Posterior cingulate gyrus (tissue), 11 donors: ENCODE measurements at regions of chr10 and their contacts with region 1.

Region 1: GRCh38 chr10:33330543-33331378 is 3.7 kb downstream of the NRP1 start:
- DNase-seq: peak; percentile 61 to 97 (median 88)

Region 2: GRCh38 chr10:33145451-33146188 is 185.1 kb before region 1 on chr10:
- intact Hi-C with region 1: no loop called
- DNase-seq: no peak

Region 3: GRCh38 chr10:33193057-33193700 is 137.6 kb before region 1 on chr10:
- intact Hi-C with region 1: loop called (anchors 5 kb)
- DNase-seq: peak; percentile 41 to 95 (median 70)

Region 4: GRCh38 chr10:33273295-33274002 is 57.3 kb before region 1 on chr10:
- intact Hi-C with region 1: no loop called
- DNase-seq: peak; percentile 47 to 97 (median 84)

Region 5: GRCh38 chr10:33306701-33307512 is 23.9 kb before region 1 on chr10:
- intact Hi-C with region 1: no loop called
- DNase-seq: no peak

Region 6: GRCh38 chr10:33376976-33377657 is 46.4 kb after region 1 on chr10:
- intact Hi-C with region 1: no loop called
- DNase-seq: no peak

Region 7: DNA sequence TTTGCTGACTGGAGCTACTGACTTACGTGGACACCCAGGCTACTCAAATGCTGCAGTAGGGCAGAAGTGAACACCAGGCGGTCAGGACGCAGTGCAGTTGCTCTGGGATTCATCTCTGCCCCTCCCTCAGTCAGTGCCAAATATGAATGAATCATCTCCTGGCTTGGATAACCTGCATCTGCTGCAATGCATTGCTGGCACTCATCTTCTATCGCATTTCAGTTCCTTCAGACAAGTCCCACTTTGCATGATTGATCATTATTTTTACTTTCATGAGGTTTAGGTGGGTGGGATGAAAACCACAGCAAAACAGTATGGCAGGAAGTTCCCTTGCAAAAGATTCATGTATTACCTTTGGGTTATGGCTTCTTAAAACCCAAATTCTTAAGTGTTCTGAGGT is 228.3 kb after region 1 on chr10:
- intact Hi-C with region 1: loop called (anchors 10 kb)
- DNase-seq: no peak

Region 8: GRCh38 chr10:33772370-33773252 is 441.9 kb after region 1 on chr10:
- intact Hi-C with region 1: loop called (anchors 10 kb)
- DNase-seq: peak in 6 of 10 donors; percentile 45 to 91 (median 54)

Region 9: GRCh38 chr10:34637418-34637911 is 1306.7 kb after region 1 on chr10:
- intact Hi-C with region 1: loop called (anchors 1 kb)
- DNase-seq: peak; percentile 40 to 95 (median 75)